PC-3 (cell line): ENCODE measurements at regions of chr6 and their contacts with region 1.

Region 1: GRCh38 chr6:26156076-26156849 is 69.0 kb downstream of the HFE start:
- DNase-seq: peak; percentile 95
- ATAC-seq: peak; percentile 47
- H3K4me3 ChIP-seq: peak overlapping the region; percentile 90
- H3K27ac ChIP-seq: peak overlapping the region; percentile 79
- H3K4me1 ChIP-seq: peaks cover 25% of the 10 kb centered on the region
- H3K27me3 ChIP-seq: no peaks in the 10 kb centered on the region
- CTCF ChIP-seq: no peak

Region 2: GRCh38 chr6:24910961-24911712 is 1245.1 kb before region 1 on chr6:
- CTCF ChIA-PET with region 1: no interaction called
- POLR2A ChIA-PET with region 1: interaction called, 12 read pairs
- intact Hi-C with region 1: no loop called
- DNase-seq: peak; percentile 37
- ATAC-seq: peak; percentile 53
- H3K4me3 ChIP-seq: peak overlapping the region; percentile 72
- H3K27ac ChIP-seq: no peak overlapping the region
- H3K4me1 ChIP-seq: peaks cover 32% of the 10 kb centered on the region
- H3K27me3 ChIP-seq: peaks cover 12% of the 10 kb centered on the region; the same call in 1 of the 2 replicates
- CTCF ChIP-seq: no peak

Region 3: DNA sequence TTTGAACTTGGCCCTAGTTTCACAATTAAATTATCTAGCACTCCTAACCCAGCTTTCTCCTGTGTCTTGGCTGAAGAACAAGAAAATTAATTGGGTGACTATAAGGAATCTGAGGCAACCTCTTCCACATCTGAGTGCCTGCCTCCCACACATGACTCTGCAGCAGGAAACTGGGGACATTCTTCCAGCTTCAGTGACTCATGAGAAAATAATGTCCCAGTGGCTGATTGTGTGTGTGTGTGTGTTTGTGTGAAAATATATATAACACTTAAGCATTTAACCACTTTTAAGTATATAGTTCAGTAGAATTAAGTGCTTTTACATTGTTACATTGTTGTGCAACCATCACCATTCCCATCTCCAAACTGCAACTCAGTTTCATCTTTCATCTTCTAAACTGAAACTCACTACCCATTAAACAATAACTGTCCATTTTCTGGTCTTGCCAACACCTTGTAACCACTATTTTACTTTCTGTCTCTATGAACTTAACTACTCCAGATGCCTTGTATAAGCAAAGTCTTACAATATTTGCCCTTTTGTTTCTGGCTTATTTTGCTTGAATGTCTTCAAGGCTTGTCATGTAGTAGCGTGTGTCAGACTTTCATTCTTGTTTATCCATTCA is 185.0 kb before region 1 on chr6:
- CTCF ChIA-PET with region 1: no interaction called
- POLR2A ChIA-PET with region 1: no interaction called
- intact Hi-C with region 1: no loop called
- DNase-seq: peak; percentile 92
- ATAC-seq: peak; percentile 95
- H3K4me3 ChIP-seq: 0 out of 2 replicates have a peak overlapping the region, but pooled peaks have one; percentile 10
- H3K27ac ChIP-seq: peak overlapping the region; percentile 58
- H3K4me1 ChIP-seq: peaks cover 22% of the 10 kb centered on the region
- H3K27me3 ChIP-seq: no peaks in the 10 kb centered on the region
- CTCF ChIP-seq: no peak

Region 4: GRCh38 chr6:26031595-26032339 is 124.5 kb before region 1 on chr6:
- CTCF ChIA-PET with region 1: no interaction called
- POLR2A ChIA-PET with region 1: no interaction called
- intact Hi-C with region 1: loop called (anchors 2 kb)
- DNase-seq: peak; percentile 99
- ATAC-seq: peak; percentile 60
- H3K4me3 ChIP-seq: peak overlapping the region; percentile 83
- H3K27ac ChIP-seq: peak overlapping the region; percentile 82
- H3K4me1 ChIP-seq: peaks cover 40% of the 10 kb centered on the region
- H3K27me3 ChIP-seq: no peaks in the 10 kb centered on the region
- CTCF ChIP-seq: no peak

Region 5: DNA sequence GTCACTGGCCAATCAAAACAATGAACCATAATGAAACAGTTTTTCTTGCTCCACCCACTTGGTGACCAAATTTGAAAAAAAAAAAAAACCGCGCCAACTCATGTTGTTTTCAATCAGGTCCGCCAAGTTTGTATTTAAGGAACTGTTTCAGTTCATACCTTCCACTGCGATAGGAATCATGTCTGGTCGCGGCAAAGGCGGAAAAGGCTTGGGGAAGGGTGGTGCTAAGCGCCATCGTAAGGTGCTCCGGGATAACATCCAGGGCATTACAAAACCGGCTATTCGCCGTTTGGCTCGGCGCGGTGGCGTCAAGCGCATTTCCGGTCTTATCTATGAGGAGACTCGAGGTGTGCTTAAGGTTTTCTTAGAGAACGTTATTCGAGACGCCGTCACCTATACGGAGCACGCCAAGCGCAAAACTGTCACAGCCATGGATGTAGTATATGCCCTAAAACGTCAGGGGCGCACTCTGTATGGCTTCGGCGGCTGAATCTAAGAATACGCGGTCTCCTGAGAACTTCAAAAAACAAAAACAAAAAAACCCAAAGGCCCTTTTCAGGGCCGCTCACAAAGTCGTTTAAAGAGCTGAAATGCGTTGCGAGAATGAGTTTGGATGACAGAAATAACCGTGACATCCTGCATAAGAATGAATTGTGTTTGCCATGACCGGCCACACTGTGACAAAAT is 52.4 kb before region 1 on chr6:
- CTCF ChIA-PET with region 1: no interaction called
- POLR2A ChIA-PET with region 1: no interaction called
- intact Hi-C with region 1: loop called (anchors 1 kb)
- DNase-seq: peak; percentile 97
- ATAC-seq: peak; percentile 81
- H3K4me3 ChIP-seq: peak overlapping the region; percentile 68
- H3K27ac ChIP-seq: peak overlapping the region; percentile 84
- H3K4me1 ChIP-seq: peaks cover 28% of the 10 kb centered on the region
- H3K27me3 ChIP-seq: no peaks in the 10 kb centered on the region
- CTCF ChIP-seq: peak; percentile 46; the same call in 1 of the 2 replicates

Region 6: GRCh38 chr6:26128013-26128771 is 28.1 kb before region 1 on chr6:
- CTCF ChIA-PET with region 1: no interaction called
- POLR2A ChIA-PET with region 1: interaction called, 174 read pairs
- intact Hi-C with region 1: loop called (anchors 1 kb)
- DNase-seq: no peak
- ATAC-seq: no peak
- H3K4me3 ChIP-seq: peak overlapping the region; percentile 96; the same call in 1 of the 2 replicates
- H3K27ac ChIP-seq: no peak overlapping the region
- H3K4me1 ChIP-seq: peaks cover 15% of the 10 kb centered on the region
- H3K27me3 ChIP-seq: no peaks in the 10 kb centered on the region
- CTCF ChIP-seq: no peak

Region 7: DNA sequence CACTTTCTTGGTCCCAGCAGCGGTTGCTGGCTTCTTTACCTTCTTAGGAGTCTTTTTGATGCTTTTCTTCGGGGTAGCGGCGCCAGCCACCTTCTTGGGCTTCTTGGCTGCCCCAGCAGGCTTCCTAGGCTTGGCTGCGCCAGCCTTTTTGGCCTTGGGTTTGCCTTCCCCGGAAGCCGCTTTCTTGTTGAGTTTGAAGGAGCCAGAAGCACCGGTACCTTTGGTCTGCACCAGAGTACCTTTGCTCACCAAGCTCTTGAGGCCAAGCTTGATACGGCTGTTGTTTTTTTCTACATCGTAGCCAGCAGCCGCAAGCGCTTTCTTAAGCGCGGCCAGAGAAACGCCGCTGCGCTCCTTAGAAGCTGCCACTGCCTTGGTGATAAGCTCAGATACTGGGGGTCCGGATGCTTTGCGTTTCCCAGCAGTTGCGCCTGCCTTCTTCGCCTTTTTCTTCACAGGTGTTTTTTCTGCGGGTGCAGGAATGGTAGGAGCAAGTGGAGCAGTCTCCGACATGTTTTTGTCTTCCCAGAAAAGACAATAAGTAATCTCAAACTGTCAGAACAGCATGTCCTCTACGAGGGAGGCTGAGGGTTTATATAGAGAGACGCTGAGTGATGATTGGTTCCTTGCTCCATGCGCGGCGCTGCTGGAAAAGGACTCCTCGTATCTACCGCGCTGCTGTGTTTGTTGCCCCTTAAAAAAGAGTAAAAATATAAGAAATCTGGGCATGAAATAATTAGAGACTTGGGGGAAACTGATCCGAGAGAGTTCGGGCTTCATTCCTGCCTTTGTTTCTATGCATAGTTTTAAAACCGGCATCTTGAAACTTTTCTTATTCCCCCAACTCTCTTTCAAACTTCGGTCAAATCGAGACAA is 78.4 kb after region 1 on chr6:
- CTCF ChIA-PET with region 1: no interaction called
- POLR2A ChIA-PET with region 1: interaction called, 15 read pairs
- intact Hi-C with region 1: no loop called
- DNase-seq: peak; percentile 97
- ATAC-seq: peak; percentile 69
- H3K4me3 ChIP-seq: peak overlapping the region; percentile 68
- H3K27ac ChIP-seq: peak overlapping the region; percentile 79
- H3K4me1 ChIP-seq: peaks cover 40% of the 10 kb centered on the region
- H3K27me3 ChIP-seq: no peaks in the 10 kb centered on the region
- CTCF ChIP-seq: no peak

Region 8: GRCh38 chr6:27809939-27810767 is 1653.9 kb after region 1 on chr6:
- CTCF ChIA-PET with region 1: no interaction called
- POLR2A ChIA-PET with region 1: interaction called, 10 read pairs
- intact Hi-C with region 1: no loop called
- DNase-seq: peak; percentile 99
- ATAC-seq: peak; percentile 28
- H3K4me3 ChIP-seq: peak overlapping the region; percentile 76
- H3K27ac ChIP-seq: peak overlapping the region; percentile 65
- H3K4me1 ChIP-seq: peaks cover 28% of the 10 kb centered on the region
- H3K27me3 ChIP-seq: no peaks in the 10 kb centered on the region
- CTCF ChIP-seq: 0 out of 2 replicates have a peak, but pooled peaks have one; percentile 14